ENCODE measurements at regions of chrX and their contacts with region 1.

Region 1: DNA sequence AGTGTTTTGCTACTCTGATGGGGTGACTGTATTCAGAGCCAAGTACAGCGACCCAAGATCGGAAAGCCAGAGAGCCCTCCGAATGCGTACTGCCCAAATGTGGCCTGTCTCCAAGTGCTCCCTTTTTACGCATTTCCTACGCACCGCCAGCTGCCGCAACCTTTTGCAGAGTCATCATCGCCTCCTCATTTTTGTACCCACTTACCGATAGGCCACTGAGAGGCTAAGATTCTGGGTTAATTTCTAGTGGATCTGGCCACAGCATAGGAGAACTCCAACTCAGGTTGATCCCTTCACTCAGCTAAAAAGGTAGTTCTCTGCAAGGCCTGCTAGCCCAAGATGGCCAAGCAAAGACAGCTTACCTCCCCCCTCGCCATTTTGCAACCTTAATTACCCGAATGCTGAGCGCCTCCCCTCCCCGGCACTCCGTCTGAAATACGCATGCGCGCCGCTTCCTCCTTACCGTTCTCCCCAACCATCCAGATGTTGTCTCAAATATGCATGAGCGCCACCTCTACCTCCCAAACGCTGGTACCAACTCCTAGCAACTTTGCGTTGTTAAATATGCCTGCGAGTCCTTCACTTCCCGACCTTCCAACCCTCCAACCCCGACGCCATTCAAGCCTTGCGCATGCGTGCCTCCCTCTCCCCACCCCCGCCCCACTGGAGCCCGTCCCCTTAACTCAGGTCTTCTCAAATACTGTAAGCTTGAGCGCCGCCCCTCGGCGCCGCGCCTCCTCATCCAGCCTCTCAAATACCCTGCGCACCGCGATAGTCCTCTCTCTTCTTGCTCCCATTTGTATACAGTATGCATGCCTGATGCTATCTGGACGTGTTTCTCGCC is 11.8 kb upstream of the ZCCHC13 start:
- DNase-seq: peak; percentile 67
- H3K4me3 Mint-ChIP-seq: peak overlapping the region; percentile 91
- H3K27ac Mint-ChIP-seq: peak overlapping the region; percentile 100
- H3K4me1 Mint-ChIP-seq: peaks cover 22% of the 10 kb centered on the region
- H3K27me3 Mint-ChIP-seq: no peaks in the 10 kb centered on the region

Region 2: GRCh38 chrX:73562984-73563737 is 729.0 kb before region 1 on chrX and contains the start of gene CHIC1:
- intact Hi-C with region 1: loop called (anchors 5 kb)
- DNase-seq: peak; percentile 63
- H3K4me3 Mint-ChIP-seq: peak within 1 kb of the TSS; percentile 98
- H3K27ac Mint-ChIP-seq: peak within 1 kb of the TSS; percentile 99
- H3K4me1 Mint-ChIP-seq: peaks cover 24% of the 10 kb centered on the region
- H3K27me3 Mint-ChIP-seq: no peaks in the 10 kb centered on the region
- total RNA-seq, gene CHIC1: 5.2 and 6.9 TPM in 2 replicates

Region 3: GRCh38 chrX:74248889-74249288 is 43.3 kb before region 1 on chrX:
- intact Hi-C with region 1: loop called (anchors 5 kb)
- DNase-seq: no peak
- H3K4me3 Mint-ChIP-seq: no peak overlapping the region
- H3K27ac Mint-ChIP-seq: no peak overlapping the region
- H3K4me1 Mint-ChIP-seq: no peaks in the 10 kb centered on the region
- H3K27me3 Mint-ChIP-seq: no peaks in the 10 kb centered on the region

Region 4: DNA sequence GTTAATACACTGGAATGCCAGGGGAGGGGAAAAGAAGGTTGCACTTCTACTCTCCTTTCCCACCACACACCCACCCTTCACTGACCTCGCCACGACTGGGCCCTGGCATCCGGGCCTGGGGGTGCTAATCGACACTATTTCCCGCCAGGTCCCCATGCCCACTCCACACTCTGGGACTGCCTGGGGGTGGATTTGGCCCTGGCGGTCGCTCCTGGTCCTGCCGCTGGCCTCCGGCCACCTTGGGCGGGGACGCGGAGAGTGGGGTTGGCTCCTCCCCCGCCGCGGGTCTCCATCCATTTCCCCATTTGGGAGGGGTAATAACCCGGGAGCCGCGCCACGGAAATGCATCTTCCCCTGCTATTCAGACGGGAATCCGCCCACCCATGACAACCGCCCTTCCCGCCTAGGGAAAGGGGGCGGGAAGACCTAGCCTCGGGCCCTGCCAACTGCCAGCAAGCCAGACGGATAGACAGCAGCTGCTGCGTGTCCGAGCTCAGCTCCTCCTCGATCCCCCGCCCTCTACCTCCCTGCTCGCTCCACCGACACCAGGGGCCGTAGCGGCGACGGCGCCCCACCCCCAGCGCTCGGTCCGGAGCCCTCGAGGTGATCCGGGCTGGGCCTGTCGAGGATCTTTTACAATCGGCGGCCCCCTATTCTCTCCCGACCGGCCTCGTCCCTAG is 244.1 kb after region 1 on chrX:
- intact Hi-C with region 1: loop called (anchors 5 kb)
- DNase-seq: peak; percentile 7
- H3K4me3 Mint-ChIP-seq: peak overlapping the region; percentile 77
- H3K27ac Mint-ChIP-seq: peak overlapping the region; percentile 23
- H3K4me1 Mint-ChIP-seq: peaks cover 37% of the 10 kb centered on the region
- H3K27me3 Mint-ChIP-seq: no peaks in the 10 kb centered on the region

Region 5: GRCh38 chrX:74614093-74614909 is 322.1 kb after region 1 on chrX and contains the start of gene RLIM:
- intact Hi-C with region 1: loop called (anchors 1 kb)
- DNase-seq: peak; percentile 88
- H3K4me3 Mint-ChIP-seq: peak within 1 kb of the TSS; percentile 100
- H3K27ac Mint-ChIP-seq: peak within 1 kb of the TSS; percentile 99
- H3K4me1 Mint-ChIP-seq: peaks cover 7% of the 10 kb centered on the region
- H3K27me3 Mint-ChIP-seq: no peaks in the 10 kb centered on the region
- total RNA-seq, gene RLIM: 30.5 and 31.4 TPM in 2 replicates

Region 6: GRCh38 chrX:75273483-75273882 is 981.3 kb after region 1 on chrX:
- intact Hi-C with region 1: loop called (anchors 2 kb)
- DNase-seq: no peak
- H3K4me3 Mint-ChIP-seq: peak overlapping the region; percentile 94
- H3K27ac Mint-ChIP-seq: peak overlapping the region; percentile 96
- H3K4me1 Mint-ChIP-seq: peaks cover 41% of the 10 kb centered on the region
- H3K27me3 Mint-ChIP-seq: no peaks in the 10 kb centered on the region

Region 7: DNA sequence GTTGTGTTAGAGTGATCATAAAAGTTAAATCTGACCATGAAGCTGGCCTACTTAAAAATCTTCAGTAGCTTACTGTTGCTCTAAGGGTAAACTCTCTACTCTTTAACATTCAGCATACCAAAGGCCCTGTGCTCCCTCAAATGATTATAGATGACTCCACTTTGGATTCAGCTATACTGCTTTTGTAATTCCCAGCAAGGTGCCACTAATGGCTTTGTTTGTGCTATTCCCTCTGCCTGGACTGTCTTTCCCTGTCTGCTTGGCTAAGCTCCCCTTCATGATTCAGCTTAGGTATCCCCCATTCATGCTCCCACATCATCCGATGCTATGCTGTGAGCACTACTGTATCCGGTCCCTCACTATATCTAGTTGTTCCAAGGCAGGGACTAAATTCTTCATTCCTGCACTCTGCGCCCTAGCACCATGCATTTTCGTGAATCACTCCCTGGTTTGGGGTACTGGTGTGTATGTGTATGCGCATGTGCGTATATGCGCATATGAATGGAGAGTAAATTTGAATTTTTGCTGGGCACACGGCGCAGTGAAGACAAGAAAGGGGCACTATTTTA is 1880.2 kb after region 1 on chrX:
- intact Hi-C with region 1: loop called (anchors 5 kb)
- DNase-seq: no peak
- H3K4me3 Mint-ChIP-seq: peak overlapping the region; percentile 94
- H3K27ac Mint-ChIP-seq: peak overlapping the region; percentile 98
- H3K4me1 Mint-ChIP-seq: peaks cover 38% of the 10 kb centered on the region
- H3K27me3 Mint-ChIP-seq: no peaks in the 10 kb centered on the region

Measured in activated T-helper 1 cell treated with anti-CD3 and anti-CD28 coated beads, Interleukin-12 subunit alpha, Interleukin-12 subunit beta, Interleukin-2, Interleukin-4 antibody, amounts not matched to agents 30 ng/mL and 10 ng/mL and 1 ng/mL, durations not matched to agents 14 hours and 24 hours and 36 hours (primary cell).